Posterior vena cava (tissue), 2 donors: ENCODE measurements at regions of chr19 and their contacts with region 1.

Region 1: DNA sequence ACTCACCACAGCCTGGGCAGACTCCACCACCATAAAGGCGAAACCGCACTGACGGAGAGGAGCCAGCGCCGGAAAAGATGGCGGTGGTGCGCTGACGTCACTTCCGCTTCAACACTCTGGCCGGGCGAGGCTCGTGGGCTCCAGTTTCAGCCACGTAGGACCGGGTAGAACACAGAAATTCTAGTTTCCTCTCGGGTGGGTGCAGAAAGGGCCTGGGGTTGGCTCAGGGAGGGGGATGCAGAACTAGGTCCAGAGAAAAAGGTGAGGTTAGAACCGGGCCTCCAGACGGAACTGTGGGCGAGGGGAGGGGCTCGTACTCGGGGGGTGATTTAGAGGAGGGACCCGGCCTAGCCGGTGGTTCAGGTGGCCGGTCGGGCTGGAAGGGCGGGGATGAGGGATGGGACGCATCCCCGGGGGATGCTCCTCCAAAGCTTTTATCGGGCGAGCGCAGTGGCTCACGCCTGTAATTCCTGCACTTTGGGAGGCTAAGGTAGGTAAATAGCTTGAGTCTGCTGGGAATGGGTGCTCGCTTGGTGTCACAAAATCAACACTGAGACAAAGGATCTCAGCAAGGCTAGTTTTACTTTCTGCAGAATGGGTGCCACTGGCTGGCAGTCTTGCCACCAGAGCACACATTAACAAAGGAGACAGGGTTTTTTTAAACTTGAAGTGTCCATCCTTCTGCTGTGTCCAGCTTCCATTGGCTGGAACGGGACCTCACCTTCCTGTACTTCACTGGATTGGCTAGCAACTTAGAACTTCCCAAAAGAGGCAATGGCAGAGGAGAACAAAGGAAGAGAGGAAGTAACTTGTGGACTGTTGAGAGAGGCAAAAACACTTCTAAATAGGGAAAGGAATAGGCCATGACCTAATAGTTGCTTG is at the start of gene ZNF561:
- DNase-seq: peak; percentile 97
- total RNA-seq, gene ZNF561: 21.5 to 27.4 TPM

Region 2: GRCh38 chr19:9584073-9584833 is 37.1 kb before region 1 on chr19 and contains the start of gene ZNF121:
- intact Hi-C with region 1: loop called in 1 of 2 experiments (anchors 2 kb)
- DNase-seq: peak; percentile 97
- total RNA-seq, gene ZNF121: 26.8 to 30.0 TPM

Region 3: DNA sequence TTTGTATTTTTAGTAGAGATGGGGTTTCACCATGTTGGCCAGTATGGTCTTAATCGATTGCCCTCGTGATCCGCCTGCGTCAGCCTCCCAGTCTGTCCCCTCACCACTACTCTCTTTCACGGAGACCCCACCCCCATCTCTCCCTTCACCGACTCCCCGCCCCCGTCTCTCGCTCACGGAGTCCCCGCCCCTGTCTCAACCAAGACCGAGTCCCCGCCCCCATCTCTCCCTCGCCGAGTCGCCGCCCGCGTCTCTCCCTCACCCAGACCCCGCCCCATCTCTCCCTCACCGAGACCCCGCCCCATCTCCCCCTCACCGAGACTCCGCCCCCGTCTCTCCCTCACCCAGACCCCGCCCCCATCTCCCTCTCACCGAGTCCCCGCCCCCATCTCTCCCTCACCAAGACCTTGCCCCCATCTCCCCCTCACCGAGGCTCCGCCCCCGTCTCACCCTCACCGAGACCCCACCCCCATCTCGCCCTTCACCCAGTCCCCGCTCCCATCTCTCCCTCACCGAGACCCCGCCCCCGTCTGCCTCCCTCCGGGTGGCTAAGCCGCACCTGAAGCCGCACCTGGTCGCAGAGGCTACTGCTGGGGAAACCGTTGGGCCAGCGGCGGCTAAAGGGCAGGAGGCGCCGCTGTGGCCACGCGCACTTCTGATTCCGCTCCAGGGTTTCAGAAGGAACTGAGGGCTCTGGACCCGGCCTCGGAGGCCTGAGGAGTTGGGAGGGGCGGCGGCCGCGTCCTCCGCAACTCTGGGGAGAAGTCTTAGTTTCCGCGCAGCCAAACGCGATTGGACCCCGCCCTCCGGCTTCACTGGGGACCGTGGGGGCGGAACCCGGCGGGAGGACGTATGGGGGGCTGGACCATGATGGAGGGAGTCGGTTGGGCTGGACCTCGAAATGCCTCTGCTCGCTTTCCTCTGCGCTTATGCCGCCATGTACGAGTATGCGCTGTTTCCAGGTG is 164.3 kb after region 1 on chr19:
- intact Hi-C with region 1: loop called (anchors 5 to 10 kb)
- DNase-seq: peak; percentile 99